ENCODE measurements at regions of chr17 and their contacts with region 1.

Region 1: GRCh38 chr17:80991645-80992076 is at the start of gene CHMP6:
- DNase-seq: peak in 40 of 42 donors; percentile 38 to 87 (median 73)

Region 2: GRCh38 chr17:81090361-81091136 is 98.9 kb after region 1 on chr17:
- intact Hi-C with region 1: no loop called
- DNase-seq: no peak

Region 3: GRCh38 chr17:81101614-81102306 is 110.1 kb after region 1 on chr17:
- intact Hi-C with region 1: loop called (anchors 5 kb)
- DNase-seq: peak; percentile 60 to 94 (median 87)

Measured in head of caudate nucleus (tissue), 42 donors.